PC-9 (cell line): ENCODE measurements at regions of chr11 and their contacts with region 1.

Region 1: DNA sequence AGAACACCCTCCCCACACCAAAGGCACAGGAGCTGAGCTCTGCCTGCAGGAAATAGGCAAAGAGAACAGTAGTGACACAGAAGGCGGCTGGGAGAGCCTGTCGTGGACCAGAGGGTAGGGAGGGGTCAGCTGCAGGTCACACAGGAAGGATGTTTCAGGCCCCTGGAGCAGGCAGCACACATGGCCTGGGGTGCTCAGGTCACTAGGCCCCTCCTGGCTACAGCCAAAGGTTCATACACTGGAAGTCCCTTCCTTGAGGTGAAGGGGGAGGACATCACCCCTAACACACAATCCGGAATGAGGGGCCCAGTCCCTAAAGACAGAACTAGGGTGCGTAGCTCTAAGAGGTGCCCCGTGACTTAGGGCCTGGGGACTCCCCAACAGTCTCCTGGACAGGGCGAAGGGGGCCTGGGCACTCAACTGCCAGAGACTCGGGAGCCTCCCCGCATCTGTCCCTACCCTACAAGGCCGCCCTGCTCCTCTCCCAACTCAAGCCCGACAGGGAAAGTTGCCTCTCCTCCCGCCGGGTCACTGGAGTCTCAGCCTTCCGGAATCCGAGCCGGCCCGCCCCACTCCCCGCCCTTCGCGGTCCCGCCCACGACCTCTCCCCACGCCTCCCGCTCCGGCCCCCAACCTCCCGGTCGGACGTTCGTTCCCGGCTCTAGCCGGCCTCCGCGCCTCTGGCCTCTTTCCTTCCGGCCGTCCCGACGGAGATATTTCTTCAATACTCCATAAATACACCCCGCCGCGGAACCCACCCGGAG is at the start of gene CYB5R2:
- DNase-seq: peak in 1 of 2 experiments; percentile 50
- H3K4me3 ChIP-seq: no peak within 1 kb of the TSS
- H3K27ac ChIP-seq: no peak within 1 kb of the TSS
- H3K4me1 ChIP-seq: 0 out of 2 replicates have a peak, but pooled peaks cover 11% of the 10 kb centered on the region
- H3K27me3 ChIP-seq: no peaks in the 10 kb centered on the region
- CTCF ChIP-seq: no peak
- total RNA-seq, gene CYB5R2: 13.2 and 16.7 TPM in 2 replicates

Region 2: GRCh38 chr11:7513234-7514098 is 159.7 kb before region 1 on chr11 and contains the start of gene PPFIBP2:
- CTCF ChIA-PET with region 1: no interaction called
- POLR2A ChIA-PET with region 1: no interaction called
- intact Hi-C with region 1: loop called (anchors 5 kb)
- DNase-seq: peak; percentile 51 to 70
- H3K4me3 ChIP-seq: peak within 1 kb of the TSS; percentile 77
- H3K27ac ChIP-seq: no peak within 1 kb of the TSS
- H3K4me1 ChIP-seq: no peaks in the 10 kb centered on the region
- H3K27me3 ChIP-seq: no peaks in the 10 kb centered on the region
- CTCF ChIP-seq: peak; percentile 80
- total RNA-seq, gene PPFIBP2: 13.6 and 13.9 TPM in 2 replicates